Right ventricle myocardium superior (tissue), 1 donor: ENCODE measurements at regions of chr6 and their contacts with region 1.

Region 1: GRCh38 chr6:2931970-2932748 is 29.1 kb upstream of the SERPINB9 start:
- DNase-seq: peak; percentile 82
- ATAC-seq: peak; percentile 96

Region 2: GRCh38 chr6:2848851-2849250 is 83.3 kb before region 1 on chr6:
- intact Hi-C with region 1: loop called (anchors 5 kb)
- DNase-seq: no peak
- ATAC-seq: no peak